T-cell (primary cell): ENCODE measurements at regions of chr7 and their contacts with region 1.

Region 1: DNA sequence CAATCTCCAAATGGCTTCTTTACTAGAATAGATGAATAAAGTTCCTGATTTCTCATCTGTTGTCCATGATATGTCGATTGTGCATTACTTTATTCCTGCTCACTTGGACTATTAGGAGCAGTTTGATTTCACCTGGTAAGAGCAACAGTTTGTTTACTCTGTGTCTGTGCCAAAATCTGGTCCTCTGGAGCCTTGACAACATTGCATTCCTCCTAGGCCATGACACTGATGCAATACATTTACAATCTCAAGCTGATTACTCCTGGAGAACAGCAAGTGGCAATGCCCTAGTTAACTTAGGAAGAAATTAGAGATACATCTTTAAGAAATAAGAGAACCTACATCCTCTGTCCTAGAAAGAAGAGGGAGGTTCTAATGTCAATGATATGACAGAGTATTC is 71.8 kb downstream of the SGCE start:
- DNase-seq: no peak
- ATAC-seq: no peak
- H3K4me3 ChIP-seq: no peak overlapping the region
- H3K4me3 Mint-ChIP-seq: no peak overlapping the region
- H3K27ac ChIP-seq: no peak overlapping the region
- H3K27ac Mint-ChIP-seq: no peak overlapping the region
- H3K4me1 ChIP-seq: no peaks in the 10 kb centered on the region
- H3K4me1 Mint-ChIP-seq: no peaks in the 10 kb centered on the region
- H3K27me3 ChIP-seq: no peaks in the 10 kb centered on the region
- H3K27me3 Mint-ChIP-seq: no peaks in the 10 kb centered on the region

Region 2: GRCh38 chr7:93515144-93515543 is 1069.0 kb before region 1 on chr7:
- CTCF ChIA-PET with region 1: no interaction called
- POLR2A ChIA-PET with region 1: interaction called in 1 of 2 experiments, 15 read pairs
- DNase-seq: no peak
- ATAC-seq: no peak
- H3K4me3 ChIP-seq: no peak overlapping the region
- H3K4me3 Mint-ChIP-seq: no peak overlapping the region
- H3K27ac ChIP-seq: no peak overlapping the region
- H3K27ac Mint-ChIP-seq: no peak overlapping the region
- H3K4me1 ChIP-seq: no peaks in the 10 kb centered on the region
- H3K4me1 Mint-ChIP-seq: no peaks in the 10 kb centered on the region
- H3K27me3 ChIP-seq: no peaks in the 10 kb centered on the region
- H3K27me3 Mint-ChIP-seq: no peaks in the 10 kb centered on the region

Region 3: GRCh38 chr7:94595717-94596116 is 11.6 kb after region 1 on chr7:
- CTCF ChIA-PET with region 1: no interaction called
- POLR2A ChIA-PET with region 1: no interaction called
- DNase-seq: no peak
- ATAC-seq: no peak
- H3K4me3 ChIP-seq: no peak overlapping the region
- H3K4me3 Mint-ChIP-seq: no peak overlapping the region
- H3K27ac ChIP-seq: no peak overlapping the region
- H3K27ac Mint-ChIP-seq: no peak overlapping the region
- H3K4me1 ChIP-seq: no peaks in the 10 kb centered on the region
- H3K4me1 Mint-ChIP-seq: no peaks in the 10 kb centered on the region
- H3K27me3 ChIP-seq: no peaks in the 10 kb centered on the region
- H3K27me3 Mint-ChIP-seq: no peaks in the 10 kb centered on the region